T-cell (primary cell): ENCODE measurements at regions of chrX and their contacts with region 1.

Region 1: DNA sequence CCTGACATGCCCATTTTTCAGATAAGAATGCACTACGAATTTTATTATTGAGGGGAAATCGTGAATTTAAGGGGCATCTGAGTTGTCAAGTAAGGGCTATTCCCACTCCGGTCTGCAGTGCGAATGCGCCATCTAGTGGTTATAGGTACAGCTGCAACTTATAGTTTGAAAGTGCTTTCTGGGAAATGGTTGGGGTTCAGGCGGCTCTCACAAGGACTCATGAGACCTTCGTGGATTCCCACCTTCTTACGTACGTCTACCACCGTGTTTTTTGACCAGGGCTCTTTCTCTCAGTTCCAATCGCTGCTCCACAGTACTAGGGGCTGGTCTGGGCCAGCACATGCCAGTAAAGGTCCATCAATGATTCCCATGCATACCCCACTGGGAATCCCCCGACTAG is 12.3 kb downstream of the MSL3 start:
- DNase-seq: peak in 32 of 35 experiments; percentile 24 to 81 (median 45)
- ATAC-seq: peak; percentile 61 to 74 (median 68)
- H3K4me3 ChIP-seq: no peak overlapping the region
- H3K4me3 Mint-ChIP-seq: no peak overlapping the region
- H3K27ac ChIP-seq: peak overlapping the region; percentile 18
- H3K27ac Mint-ChIP-seq: peak overlapping the region; percentile 71 to 80
- H3K4me1 ChIP-seq: peaks cover 7 to 35% of the 10 kb centered on the region in 2 experiments
- H3K4me1 Mint-ChIP-seq: peaks cover 31 to 50% (median 46%) of the 10 kb centered on the region in 3 donors
- H3K27me3 ChIP-seq: no peaks in the 10 kb centered on the region
- H3K27me3 Mint-ChIP-seq: no peaks in the 10 kb centered on the region

Region 2: DNA sequence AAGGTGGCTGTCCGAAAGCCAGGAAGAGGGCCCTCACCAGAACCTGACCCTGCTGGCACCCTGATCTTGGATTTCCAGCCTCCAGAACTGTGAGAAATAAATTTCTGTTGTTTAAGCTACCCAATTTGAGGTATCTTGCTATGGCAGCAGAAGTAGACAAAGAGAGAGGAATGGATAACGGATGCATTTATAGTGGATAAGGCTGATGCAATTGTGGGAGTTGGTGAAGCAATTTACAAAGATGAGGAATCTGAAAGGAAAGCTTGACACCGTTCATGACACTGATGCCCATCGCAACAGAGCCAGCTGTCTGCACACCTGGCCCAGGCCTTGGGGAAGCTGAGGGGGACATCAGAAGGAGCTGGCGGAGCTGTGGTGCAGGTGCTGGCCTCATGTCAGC is 48.0 kb before region 1 on chrX:
- CTCF ChIA-PET with region 1: interaction called in 1 of 2 experiments, 3 read pairs
- POLR2A ChIA-PET with region 1: interaction called in 1 of 2 experiments, 12 read pairs
- DNase-seq: no peak
- ATAC-seq: no peak
- H3K4me3 ChIP-seq: no peak overlapping the region
- H3K4me3 Mint-ChIP-seq: no peak overlapping the region
- H3K27ac ChIP-seq: no peak overlapping the region
- H3K27ac Mint-ChIP-seq: no peak overlapping the region
- H3K4me1 ChIP-seq: no peaks in the 10 kb centered on the region
- H3K4me1 Mint-ChIP-seq: peaks cover 0 to 2% (median 0%) of the 10 kb centered on the region in 3 donors
- H3K27me3 ChIP-seq: no peaks in the 10 kb centered on the region
- H3K27me3 Mint-ChIP-seq: peaks cover 0 to 13% of the 10 kb centered on the region in 2 donors

Region 3: DNA sequence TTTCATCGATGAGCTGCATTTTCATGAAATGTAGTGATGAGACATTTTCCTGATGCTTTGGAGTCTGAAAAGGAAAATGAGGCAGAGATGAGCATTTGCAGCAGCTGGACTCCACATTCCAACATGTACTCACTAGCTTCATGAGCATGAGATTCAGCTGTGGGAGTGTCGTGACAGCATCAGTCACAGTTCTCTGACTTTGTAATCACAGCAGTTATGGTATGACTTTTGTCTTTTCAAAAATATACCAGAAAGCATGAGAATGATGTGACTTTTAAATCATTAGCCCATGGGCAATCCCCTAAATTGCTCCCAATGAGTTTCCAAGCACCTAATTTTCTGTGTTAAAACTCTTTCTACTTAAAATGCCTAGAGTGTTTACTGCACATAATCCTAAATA is 30.5 kb before region 1 on chrX:
- CTCF ChIA-PET with region 1: no interaction called
- POLR2A ChIA-PET with region 1: no interaction called
- DNase-seq: no peak
- ATAC-seq: no peak
- H3K4me3 ChIP-seq: no peak overlapping the region
- H3K4me3 Mint-ChIP-seq: no peak overlapping the region
- H3K27ac ChIP-seq: no peak overlapping the region
- H3K27ac Mint-ChIP-seq: no peak overlapping the region
- H3K4me1 ChIP-seq: no peaks in the 10 kb centered on the region
- H3K4me1 Mint-ChIP-seq: no peaks in the 10 kb centered on the region
- H3K27me3 ChIP-seq: peaks cover 0 to 2% of the 10 kb centered on the region in 2 experiments
- H3K27me3 Mint-ChIP-seq: peaks cover 8 to 31% of the 10 kb centered on the region in 2 donors

Region 4: GRCh38 chrX:12080265-12080664 is 309.9 kb after region 1 on chrX:
- CTCF ChIA-PET with region 1: no interaction called
- POLR2A ChIA-PET with region 1: no interaction called
- DNase-seq: no peak
- ATAC-seq: no peak
- H3K4me3 ChIP-seq: no peak overlapping the region
- H3K4me3 Mint-ChIP-seq: no peak overlapping the region
- H3K27ac ChIP-seq: no peak overlapping the region
- H3K27ac Mint-ChIP-seq: no peak overlapping the region
- H3K4me1 ChIP-seq: no peaks in the 10 kb centered on the region
- H3K4me1 Mint-ChIP-seq: no peaks in the 10 kb centered on the region
- H3K27me3 ChIP-seq: no peaks in the 10 kb centered on the region
- H3K27me3 Mint-ChIP-seq: peaks cover 3 to 15% of the 10 kb centered on the region in 2 donors